Naive thymus-derived CD4-positive, alpha-beta T cell (primary cell): ENCODE measurements at regions of chr14 and their contacts with region 1.

Region 1: GRCh38 chr14:65164068-65164824 is 61.9 kb upstream of the MAX start:
- DNase-seq: peak in 7 of 9 donors; percentile 29 to 67 (median 58)
- ATAC-seq: peak; percentile 76
- H3K4me3 ChIP-seq: no peak overlapping the region
- H3K4me3 Mint-ChIP-seq: no peak overlapping the region
- H3K27ac ChIP-seq: no peak overlapping the region
- H3K27ac Mint-ChIP-seq: peak overlapping the region in 1 of 9 donors; percentile 67
- H3K4me1 ChIP-seq: no peaks in the 10 kb centered on the region
- H3K4me1 Mint-ChIP-seq: peaks cover 0 to 43% (median 0%) of the 10 kb centered on the region in 7 donors
- H3K27me3 ChIP-seq: no peaks in the 10 kb centered on the region
- H3K27me3 Mint-ChIP-seq: no peaks in the 10 kb centered on the region

Region 2: GRCh38 chr14:65222440-65222858 is 58.2 kb after region 1 on chr14:
- CTCF ChIA-PET with region 1: interaction called, 3 read pairs
- POLR2A ChIA-PET with region 1: interaction called, 3 read pairs
- intact Hi-C with region 1: loop called in 1 of 2 experiments (anchors 1 kb)
- DNase-seq: peak in 8 of 9 donors; percentile 19 to 57 (median 44)
- ATAC-seq: peak; percentile 84
- H3K4me3 ChIP-seq: no peak overlapping the region
- H3K4me3 Mint-ChIP-seq: peak overlapping the region in 5 of 10 donors; percentile 11 to 56 (median 25)
- H3K27ac ChIP-seq: no peak overlapping the region
- H3K27ac Mint-ChIP-seq: peak overlapping the region in 3 of 9 donors; percentile 43 to 83 (median 67)
- H3K4me1 ChIP-seq: peaks cover 4 to 18% of the 10 kb centered on the region in 2 donors
- H3K4me1 Mint-ChIP-seq: peaks cover 11 to 55% (median 44%) of the 10 kb centered on the region in 7 donors
- H3K27me3 ChIP-seq: no peaks in the 10 kb centered on the region
- H3K27me3 Mint-ChIP-seq: no peaks in the 10 kb centered on the region

Region 3: GRCh38 chr14:65604936-65605335 is 440.7 kb after region 1 on chr14:
- CTCF ChIA-PET with region 1: no interaction called
- POLR2A ChIA-PET with region 1: no interaction called
- intact Hi-C with region 1: loop called in 1 of 2 experiments (anchors 10 kb)
- DNase-seq: no peak
- ATAC-seq: no peak
- H3K4me3 ChIP-seq: no peak overlapping the region
- H3K4me3 Mint-ChIP-seq: no peak overlapping the region
- H3K27ac ChIP-seq: no peak overlapping the region
- H3K27ac Mint-ChIP-seq: no peak overlapping the region
- H3K4me1 ChIP-seq: peaks cover 0 to 8% of the 10 kb centered on the region in 2 donors
- H3K4me1 Mint-ChIP-seq: peaks cover 0 to 29% (median 5%) of the 10 kb centered on the region in 7 donors
- H3K27me3 ChIP-seq: no peaks in the 10 kb centered on the region
- H3K27me3 Mint-ChIP-seq: no peaks in the 10 kb centered on the region

Region 4: GRCh38 chr14:66070509-66071319 is 906.5 kb after region 1 on chr14:
- CTCF ChIA-PET with region 1: interaction called, 10 read pairs
- POLR2A ChIA-PET with region 1: no interaction called
- intact Hi-C with region 1: loop called (anchors 1 kb)
- DNase-seq: peak; percentile 41 to 76 (median 62)
- ATAC-seq: peak; percentile 91
- H3K4me3 ChIP-seq: no peak overlapping the region
- H3K4me3 Mint-ChIP-seq: no peak overlapping the region
- H3K27ac ChIP-seq: no peak overlapping the region
- H3K27ac Mint-ChIP-seq: peak overlapping the region in 1 of 9 donors; percentile 28
- H3K4me1 ChIP-seq: no peaks in the 10 kb centered on the region
- H3K4me1 Mint-ChIP-seq: peaks cover 4 to 12% (median 8%) of the 10 kb centered on the region in 7 donors
- H3K27me3 ChIP-seq: no peaks in the 10 kb centered on the region
- H3K27me3 Mint-ChIP-seq: peaks cover 0 to 20% (median 6%) of the 10 kb centered on the region in 5 donors

Region 5: DNA sequence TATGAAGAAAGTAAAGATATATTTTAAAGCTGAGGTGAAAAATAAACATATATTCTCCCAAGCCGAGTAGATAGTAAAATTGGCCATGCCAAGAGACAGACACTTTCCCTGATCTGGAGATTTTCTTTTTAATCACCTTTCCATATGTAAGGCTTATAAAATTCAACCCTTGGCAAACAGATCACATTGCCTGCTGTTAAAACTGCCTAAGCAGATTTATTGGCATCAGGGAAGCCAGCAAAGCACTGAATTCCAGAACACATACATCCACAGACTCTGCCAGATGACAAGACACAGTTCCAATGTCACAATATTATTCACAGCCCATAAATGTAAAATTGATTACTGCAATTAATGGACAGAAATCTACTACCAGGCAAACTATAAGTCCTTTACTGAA is 1946.8 kb after region 1 on chr14:
- CTCF ChIA-PET with region 1: no interaction called
- POLR2A ChIA-PET with region 1: no interaction called
- intact Hi-C with region 1: loop called in 1 of 2 experiments (anchors 5 kb)
- DNase-seq: no peak
- ATAC-seq: no peak
- H3K4me3 ChIP-seq: no peak overlapping the region
- H3K4me3 Mint-ChIP-seq: no peak overlapping the region
- H3K27ac ChIP-seq: no peak overlapping the region
- H3K27ac Mint-ChIP-seq: no peak overlapping the region
- H3K4me1 ChIP-seq: no peaks in the 10 kb centered on the region
- H3K4me1 Mint-ChIP-seq: no peaks in the 10 kb centered on the region
- H3K27me3 ChIP-seq: no peaks in the 10 kb centered on the region
- H3K27me3 Mint-ChIP-seq: no peaks in the 10 kb centered on the region